ENCODE measurements at regions of chr2 and their contacts with region 1.

Region 1: DNA sequence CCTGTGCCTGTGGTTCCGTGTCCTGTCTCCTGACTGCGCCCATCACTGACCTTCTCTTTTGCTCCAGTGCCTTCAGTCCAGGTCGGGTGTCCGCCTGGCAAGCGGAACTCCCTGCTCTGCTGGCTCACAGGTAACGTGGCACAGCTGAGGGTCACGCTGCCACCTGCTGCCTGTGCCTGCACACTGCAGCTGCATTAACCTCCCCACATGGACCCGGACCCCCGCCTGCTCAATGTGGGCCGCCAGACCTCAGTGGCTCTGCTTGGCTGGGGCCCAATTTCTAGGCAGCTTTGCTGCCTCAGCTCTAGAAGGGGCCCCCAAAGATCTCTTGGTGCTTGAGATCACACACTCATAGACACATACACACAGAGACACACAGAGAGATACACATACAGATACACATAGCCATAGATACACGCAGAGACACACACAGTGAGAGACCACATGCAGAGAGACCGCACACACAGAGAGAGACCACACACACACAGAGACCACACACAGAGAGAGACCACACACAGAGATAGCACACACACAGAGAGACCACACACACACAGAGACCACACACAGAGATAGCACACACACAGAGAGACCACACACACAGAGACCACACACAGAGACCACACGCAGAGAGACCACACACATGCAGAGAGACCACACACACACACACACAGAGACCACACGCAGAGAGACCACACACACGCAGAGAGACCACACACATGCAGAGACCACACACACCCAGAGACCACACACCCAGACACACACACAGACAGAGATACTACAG is 14.9 kb upstream of the CNNM3 start:
- DNase-seq: peak; percentile 86
- H3K4me3 Mint-ChIP-seq: no peak overlapping the region
- H3K27ac Mint-ChIP-seq: no peak overlapping the region
- H3K4me1 Mint-ChIP-seq: peaks cover 4% of the 10 kb centered on the region
- H3K27me3 Mint-ChIP-seq: no peaks in the 10 kb centered on the region

Region 2: GRCh38 chr2:96638144-96639121 is 162.8 kb before region 1 on chr2 and contains the start of gene KANSL3:
- CTCF ChIA-PET with region 1: interaction called, 4 read pairs
- POLR2A ChIA-PET with region 1: no interaction called
- intact Hi-C with region 1: loop called (anchors 10 kb)
- DNase-seq: peak; percentile 93
- H3K4me3 Mint-ChIP-seq: peak within 1 kb of the TSS; percentile 97
- H3K27ac Mint-ChIP-seq: peak within 1 kb of the TSS; percentile 90
- H3K4me1 Mint-ChIP-seq: peaks cover 28% of the 10 kb centered on the region
- H3K27me3 Mint-ChIP-seq: no peaks in the 10 kb centered on the region
- total RNA-seq, gene KANSL3: 33.7 to 39.4 TPM

Region 3: GRCh38 chr2:96739633-96740428 is 61.4 kb before region 1 on chr2 and contains the start of gene LMAN2L:
- CTCF ChIA-PET with region 1: interaction called, 4 read pairs
- POLR2A ChIA-PET with region 1: no interaction called
- intact Hi-C with region 1: loop called (anchors 1 kb)
- DNase-seq: peak; percentile 99
- H3K4me3 Mint-ChIP-seq: peak within 1 kb of the TSS; percentile 92
- H3K27ac Mint-ChIP-seq: peak within 1 kb of the TSS; percentile 52
- H3K4me1 Mint-ChIP-seq: peaks cover 35% of the 10 kb centered on the region
- H3K27me3 Mint-ChIP-seq: no peaks in the 10 kb centered on the region
- total RNA-seq, gene LMAN2L: 5.7 to 6.1 TPM

Region 4: GRCh38 chr2:96773922-96774321 is 27.3 kb before region 1 on chr2:
- CTCF ChIA-PET with region 1: interaction called, 10 read pairs
- POLR2A ChIA-PET with region 1: no interaction called
- intact Hi-C with region 1: no loop called
- DNase-seq: peak; percentile 65
- H3K4me3 Mint-ChIP-seq: peak overlapping the region; percentile 62
- H3K27ac Mint-ChIP-seq: no peak overlapping the region
- H3K4me1 Mint-ChIP-seq: peaks cover 18% of the 10 kb centered on the region
- H3K27me3 Mint-ChIP-seq: no peaks in the 10 kb centered on the region